H1 (cell line): ENCODE measurements at regions of chr6 and their contacts with region 1.

Region 1: DNA sequence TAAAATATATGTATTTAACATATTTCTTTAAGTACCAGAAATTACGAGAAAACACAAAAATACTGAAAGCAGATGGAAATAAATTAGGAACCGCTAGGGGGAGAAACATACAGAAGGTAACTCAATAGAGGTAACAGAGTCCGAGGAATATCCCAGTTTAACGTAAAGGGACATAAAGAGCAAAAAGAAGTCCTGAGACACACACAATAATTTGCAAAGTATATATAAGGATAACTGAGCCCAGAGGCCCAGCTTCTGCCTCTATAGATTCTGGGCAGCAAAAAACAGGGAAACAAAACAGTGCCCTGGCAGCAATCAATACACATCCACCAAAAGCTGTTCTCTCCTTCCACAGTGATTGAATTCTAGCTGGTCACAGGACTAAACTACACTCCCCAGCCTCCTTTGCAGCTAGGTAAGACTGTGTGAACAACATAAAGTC is 15.1 kb downstream of the TBC1D32 start:
- DNase-seq: peak in 1 of 2 experiments; percentile 48
- H3K4me3 ChIP-seq: peak overlapping the region in 1 of 4 experiments; percentile 29; a peak in 1 of 8 replicates
- H3K27ac ChIP-seq: no peak overlapping the region
- H3K4me1 ChIP-seq: no peaks in the 10 kb centered on the region
- H3K27me3 ChIP-seq: no peaks in the 10 kb centered on the region
- CTCF ChIP-seq: peak in 2 of 3 experiments; percentile 21 to 46; a peak in 2 of 4 replicates
- EP300 ChIP-seq: no peak
- POLR2A ChIP-seq: no peak
- RAD21 ChIP-seq: peak; percentile 33 to 35; a peak in 3 of 4 replicates

Region 2: GRCh38 chr6:121305957-121306607 is 13.1 kb before region 1 on chr6:
- CTCF ChIA-PET with region 1: interaction called, 38 read pairs
- POLR2A ChIA-PET with region 1: no interaction called
- DNase-seq: no peak
- H3K4me3 ChIP-seq: no peak overlapping the region
- H3K27ac ChIP-seq: no peak overlapping the region
- H3K4me1 ChIP-seq: no peaks in the 10 kb centered on the region
- H3K27me3 ChIP-seq: no peaks in the 10 kb centered on the region
- CTCF ChIP-seq: peak in 2 of 3 experiments; percentile 49 to 69; a peak in 2 of 4 replicates
- EP300 ChIP-seq: no peak
- POLR2A ChIP-seq: no peak
- RAD21 ChIP-seq: peak; percentile 84 to 85